Ascending aorta (tissue), 2 donors: ENCODE measurements at regions of chr15 and their contacts with region 1.

Region 1: DNA sequence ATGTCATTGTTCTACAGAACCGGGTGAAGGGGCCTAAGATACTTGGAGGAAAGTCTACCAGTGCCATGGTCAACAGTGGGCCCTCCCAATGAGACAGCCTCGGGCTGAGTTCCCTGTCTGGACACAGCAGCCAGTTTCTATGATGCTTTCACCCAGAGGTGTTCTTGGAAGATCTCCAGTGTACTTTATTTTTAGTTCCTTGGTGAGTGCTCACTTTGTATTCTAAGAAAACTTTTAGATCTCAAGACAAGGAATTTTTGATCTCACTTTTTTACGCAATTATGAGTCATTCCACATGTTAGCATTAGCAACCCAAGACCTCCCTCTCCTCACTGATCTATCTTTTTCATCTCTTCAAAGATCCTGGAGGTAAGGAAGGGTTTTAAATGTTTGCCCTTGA is 287.7 kb downstream of the RORA start:
- DNase-seq: no peak
- H3K4me3 ChIP-seq: no peak overlapping the region
- H3K27ac ChIP-seq: peak overlapping the region; percentile 51 to 62
- H3K4me1 ChIP-seq: peaks cover 9 to 15% of the 10 kb centered on the region in 2 donors
- H3K27me3 ChIP-seq: no peaks in the 10 kb centered on the region
- CTCF ChIP-seq: no peak

Region 2: DNA sequence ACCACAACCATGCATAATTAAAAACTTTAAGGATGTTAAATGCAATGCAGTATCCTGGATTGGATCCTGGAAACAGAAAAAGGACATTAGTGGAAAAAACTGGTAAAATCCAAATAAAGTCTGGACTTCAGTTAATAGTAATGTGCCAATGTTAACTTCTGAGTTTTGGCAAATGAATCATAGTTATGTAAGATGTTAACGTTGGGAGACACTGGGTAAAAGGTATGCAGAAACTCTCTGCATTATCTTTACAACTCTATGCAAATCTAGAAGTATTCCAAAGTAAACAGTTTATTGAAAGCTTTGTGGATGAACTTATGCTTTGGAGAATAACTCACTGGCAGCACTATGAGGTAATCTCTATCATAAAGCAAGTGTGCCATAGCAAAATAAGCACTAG is 69.7 kb before region 1 on chr15:
- intact Hi-C with region 1: no loop called
- DNase-seq: no peak
- H3K4me3 ChIP-seq: no peak overlapping the region
- H3K27ac ChIP-seq: no peak overlapping the region
- H3K4me1 ChIP-seq: no peaks in the 10 kb centered on the region
- H3K27me3 ChIP-seq: no peaks in the 10 kb centered on the region
- CTCF ChIP-seq: no peak

Region 3: DNA sequence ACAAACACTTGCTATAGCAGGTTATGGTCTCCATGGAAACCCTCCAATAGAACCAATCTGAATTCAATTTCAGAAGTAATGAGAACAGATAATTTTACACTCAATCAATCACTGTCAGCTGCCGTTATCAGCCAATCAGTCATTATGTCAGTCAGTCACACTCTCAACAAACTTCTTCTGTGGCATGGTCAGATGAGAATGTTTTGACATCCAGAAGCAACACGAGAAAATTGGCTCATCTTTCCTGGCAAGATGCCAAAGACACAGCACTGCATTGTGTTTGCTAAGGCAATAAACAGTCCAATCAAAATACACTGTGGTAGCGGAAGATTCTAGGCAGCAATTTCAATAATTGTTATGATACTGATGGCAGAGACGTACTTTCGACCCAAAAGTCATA is 96.9 kb after region 1 on chr15:
- intact Hi-C with region 1: loop called (anchors 5 kb)
- DNase-seq: no peak
- H3K4me3 ChIP-seq: peak overlapping the region in 1 of 2 donors; percentile 16
- H3K27ac ChIP-seq: peak overlapping the region; percentile 42 to 60
- H3K4me1 ChIP-seq: peaks cover 9 to 20% of the 10 kb centered on the region in 2 donors
- H3K27me3 ChIP-seq: no peaks in the 10 kb centered on the region
- CTCF ChIP-seq: no peak